ENCODE measurements at regions of chr9 and their contacts with region 1.

Region 1: GRCh38 chr9:89000973-89001916 is 10.0 kb downstream of the S1PR3 start:
- DNase-seq: peak; percentile 83 to 92 (median 88)
- ATAC-seq: peak; percentile 94
- H3K4me3 ChIP-seq: no peak overlapping the region
- H3K27ac ChIP-seq: no peak overlapping the region
- H3K4me1 ChIP-seq: peaks cover 3 to 17% of the 10 kb centered on the region in 2 donors
- H3K27me3 ChIP-seq: peaks cover 0 to 10% of the 10 kb centered on the region in 2 donors
- CTCF ChIP-seq: peak; percentile 67 to 70

Region 2: DNA sequence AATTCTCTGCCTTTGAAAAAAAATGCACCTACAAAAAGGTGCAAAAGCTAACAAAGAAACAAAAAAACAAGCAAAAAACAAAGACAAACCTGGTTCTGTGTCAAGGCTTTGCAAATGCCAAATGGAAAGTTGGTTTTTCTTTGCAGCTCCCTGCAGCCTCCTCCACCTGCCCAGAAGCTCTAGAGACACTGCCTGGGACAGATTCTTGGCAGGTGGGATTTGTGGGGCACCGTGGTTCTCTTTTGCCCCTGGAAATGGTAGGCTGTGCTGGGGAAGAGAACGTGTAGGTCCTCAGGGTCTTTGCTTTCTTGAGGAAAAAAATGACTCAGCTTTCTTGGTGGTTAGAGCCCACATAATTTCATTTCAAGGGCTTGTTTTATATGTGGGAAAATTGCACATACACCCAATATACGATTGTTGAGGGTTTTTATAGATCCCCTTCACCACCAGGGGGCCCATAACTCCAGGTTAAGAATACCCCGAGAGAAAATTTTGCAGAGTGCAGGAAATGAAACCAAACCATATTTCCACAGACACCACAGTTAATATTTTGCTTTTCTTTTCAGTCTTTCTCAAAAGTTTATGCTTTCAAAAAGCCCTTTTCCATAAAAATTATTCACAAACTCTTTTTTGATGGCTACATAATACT is 407.6 kb before region 1 on chr9:
- intact Hi-C with region 1: loop called in 1 of 2 experiments (anchors 2 kb)
- DNase-seq: peak in 2 of 4 donors; percentile 41 to 72
- ATAC-seq: peak; percentile 88
- H3K4me3 ChIP-seq: no peak overlapping the region
- H3K27ac ChIP-seq: no peak overlapping the region
- H3K4me1 ChIP-seq: no peaks in the 10 kb centered on the region
- H3K27me3 ChIP-seq: no peaks in the 10 kb centered on the region
- CTCF ChIP-seq: peak; percentile 50 to 52

Region 3: GRCh38 chr9:89059925-89060506 is 58.8 kb after region 1 on chr9:
- intact Hi-C with region 1: no loop called
- DNase-seq: no peak
- ATAC-seq: no peak
- H3K4me3 ChIP-seq: no peak overlapping the region
- H3K27ac ChIP-seq: no peak overlapping the region
- H3K4me1 ChIP-seq: no peaks in the 10 kb centered on the region
- H3K27me3 ChIP-seq: no peaks in the 10 kb centered on the region
- CTCF ChIP-seq: no peak

Measured in left lung (tissue), 14 donors.